Activated naive CD4-positive, alpha-beta T cell treated with anti-CD3 and anti-CD28 coated beads, Interleukin-2, amount 10 ng/mL, durations not matched to agents 7 days and 5 days (primary cell): ENCODE measurements at regions of chr3 and their contacts with region 1.

Region 1: GRCh38 chr3:187616307-187616972 is 53.8 kb downstream of the SST start:
- DNase-seq: peak; percentile 74
- H3K4me3 Mint-ChIP-seq: no peak overlapping the region
- H3K27ac Mint-ChIP-seq: no peak overlapping the region
- H3K4me1 Mint-ChIP-seq: no peaks in the 10 kb centered on the region
- H3K27me3 Mint-ChIP-seq: peaks cover 17% of the 10 kb centered on the region

Region 2: GRCh38 chr3:187450431-187451190 is 165.8 kb before region 1 on chr3:
- CTCF ChIA-PET with region 1: no interaction called
- DNase-seq: no peak
- H3K4me3 Mint-ChIP-seq: no peak overlapping the region
- H3K27ac Mint-ChIP-seq: no peak overlapping the region
- H3K4me1 Mint-ChIP-seq: no peaks in the 10 kb centered on the region
- H3K27me3 Mint-ChIP-seq: peaks cover 13% of the 10 kb centered on the region

Region 3: GRCh38 chr3:187642861-187643260 is 26.4 kb after region 1 on chr3:
- CTCF ChIA-PET with region 1: no interaction called
- DNase-seq: no peak
- H3K4me3 Mint-ChIP-seq: no peak overlapping the region
- H3K27ac Mint-ChIP-seq: no peak overlapping the region
- H3K4me1 Mint-ChIP-seq: no peaks in the 10 kb centered on the region
- H3K27me3 Mint-ChIP-seq: peaks cover 21% of the 10 kb centered on the region

Region 4: GRCh38 chr3:187714404-187714979 is 98.1 kb after region 1 on chr3:
- CTCF ChIA-PET with region 1: interaction called, 22 read pairs
- DNase-seq: peak; percentile 83
- H3K4me3 Mint-ChIP-seq: no peak overlapping the region
- H3K27ac Mint-ChIP-seq: peak overlapping the region; percentile 26
- H3K4me1 Mint-ChIP-seq: peaks cover 16% of the 10 kb centered on the region
- H3K27me3 Mint-ChIP-seq: peaks cover 4% of the 10 kb centered on the region

Region 5: DNA sequence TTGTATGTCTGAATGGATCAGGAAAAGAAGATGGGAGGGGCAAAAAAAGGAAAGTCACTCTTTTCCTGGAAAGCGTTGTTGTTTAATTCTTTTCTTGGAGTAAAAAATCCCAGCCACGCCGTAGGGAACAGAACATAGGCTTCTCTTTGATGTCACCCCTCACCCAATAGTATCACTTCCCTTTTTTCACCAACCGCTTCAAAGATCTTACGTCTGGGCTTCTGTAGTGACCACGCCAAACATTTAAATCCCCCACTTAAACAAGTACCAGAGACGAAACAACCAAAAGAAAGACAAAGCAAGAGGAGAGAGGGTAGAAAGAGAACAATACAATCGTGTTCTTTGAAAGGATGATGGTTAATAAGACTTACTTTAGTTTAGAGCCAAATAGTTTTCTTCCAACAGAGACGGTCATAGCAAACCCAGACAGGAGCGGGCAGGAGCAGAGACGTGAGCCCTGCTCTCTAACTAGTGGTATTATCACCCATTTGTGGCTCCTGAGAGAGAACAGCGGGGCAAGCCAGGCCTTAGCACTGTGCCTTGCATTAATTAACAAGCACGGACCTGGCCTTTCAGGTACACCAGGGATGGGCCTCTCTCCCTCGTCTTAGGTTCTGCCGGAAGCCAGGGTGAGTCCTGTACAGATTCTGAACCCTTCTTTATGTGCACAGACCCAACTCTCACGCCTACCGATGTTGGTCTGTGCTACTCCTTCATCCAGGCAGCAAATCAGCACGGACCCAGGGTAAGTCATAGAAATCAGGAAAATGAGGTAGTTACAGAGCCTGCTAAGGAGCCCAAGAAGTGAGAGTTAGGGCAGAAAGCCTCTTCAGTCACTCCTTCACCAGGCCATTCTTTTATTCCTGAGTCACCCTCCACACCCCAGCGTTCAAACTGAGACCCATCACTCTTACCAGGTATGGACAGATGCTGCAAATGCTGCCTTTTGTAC is 157.1 kb after region 1 on chr3:
- CTCF ChIA-PET with region 1: no interaction called
- DNase-seq: no peak
- H3K4me3 Mint-ChIP-seq: no peak overlapping the region
- H3K27ac Mint-ChIP-seq: peak overlapping the region; percentile 6
- H3K4me1 Mint-ChIP-seq: peaks cover 78% of the 10 kb centered on the region
- H3K27me3 Mint-ChIP-seq: no peaks in the 10 kb centered on the region

Region 6: DNA sequence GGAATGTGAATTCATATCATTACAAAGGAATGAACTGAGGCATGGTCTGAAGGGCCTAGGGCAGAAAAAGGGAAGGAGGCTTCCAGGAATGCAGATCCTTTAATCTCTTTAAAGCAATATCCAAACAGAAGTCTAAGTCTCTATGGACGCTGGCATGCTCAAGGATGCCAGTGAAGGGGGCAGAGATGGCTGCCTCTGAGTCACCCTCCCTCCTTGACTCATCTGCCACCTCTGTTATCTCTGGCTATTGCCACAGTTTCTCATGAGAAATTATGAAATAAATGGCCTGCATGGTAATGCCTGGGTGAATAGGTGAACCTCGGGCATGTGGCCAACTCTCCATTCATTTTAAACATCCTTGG is 225.1 kb after region 1 on chr3:
- CTCF ChIA-PET with region 1: no interaction called
- DNase-seq: no peak
- H3K4me3 Mint-ChIP-seq: no peak overlapping the region
- H3K27ac Mint-ChIP-seq: no peak overlapping the region
- H3K4me1 Mint-ChIP-seq: peaks cover 2% of the 10 kb centered on the region
- H3K27me3 Mint-ChIP-seq: peaks cover 11% of the 10 kb centered on the region